Left cardiac atrium (tissue), 4 donors: ENCODE measurements at regions of chr22 and their contacts with region 1.

Region 1: DNA sequence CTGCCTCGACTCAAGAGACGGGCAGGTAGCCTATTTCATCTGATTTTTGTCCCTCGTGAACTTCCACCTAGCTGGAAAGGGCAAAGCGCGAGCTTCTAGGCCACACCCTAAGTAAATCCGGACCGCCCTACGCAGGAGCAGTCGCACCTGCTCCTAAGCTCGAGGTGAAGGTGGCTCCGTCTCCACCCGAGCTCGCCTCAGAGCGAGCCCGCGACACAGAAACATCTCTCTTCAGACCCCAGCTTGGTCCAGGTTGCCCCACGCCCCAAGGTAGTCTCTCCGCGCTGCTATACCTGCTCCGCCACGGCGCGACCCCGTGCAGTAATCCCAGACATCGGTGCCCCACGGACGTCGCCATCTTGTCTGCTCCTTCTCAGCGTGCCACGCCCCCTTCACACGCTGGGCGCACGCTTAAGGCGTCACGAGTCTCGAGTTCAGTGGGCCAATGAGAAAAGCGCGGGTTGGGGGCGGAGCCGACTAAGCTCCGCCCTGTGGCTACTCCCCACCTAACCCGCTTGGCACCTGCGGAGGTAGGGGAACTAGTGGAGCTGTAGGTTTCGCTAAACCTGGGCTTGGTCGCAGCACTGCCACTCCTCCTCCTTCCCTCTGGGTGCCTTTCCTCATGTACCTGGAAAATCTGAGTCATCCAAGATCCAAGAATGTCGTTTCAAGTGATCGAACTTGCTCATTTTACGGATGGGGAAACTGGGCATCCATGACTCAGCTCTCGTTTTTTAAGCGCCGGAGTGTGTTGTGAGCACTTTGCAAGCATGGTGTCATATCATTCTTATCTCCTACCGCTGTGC is at the start of gene PISD:
- DNase-seq: peak; percentile 96
- ATAC-seq: peak; percentile 99 to 100
- total RNA-seq, gene PISD: 25.2 to 40.8 TPM

Region 2: DNA sequence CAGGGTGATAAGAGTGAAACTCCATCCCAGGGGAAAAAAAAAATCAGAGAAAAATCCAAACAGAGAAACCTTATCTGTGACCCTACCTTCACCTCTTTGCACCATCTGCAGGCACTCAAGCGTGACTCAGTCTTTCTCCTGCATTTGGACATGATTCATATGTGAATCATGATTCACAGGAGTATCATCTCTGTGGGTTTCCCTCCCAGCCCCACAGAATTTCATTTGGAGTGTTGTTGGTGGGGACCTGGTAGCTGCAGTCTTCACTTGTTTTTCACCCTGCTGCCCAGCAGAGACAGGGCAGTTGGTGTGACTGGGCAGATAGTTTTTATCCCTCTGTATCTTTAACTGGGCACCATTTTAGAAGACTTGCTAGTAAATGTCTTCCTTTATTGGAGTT is 167.5 kb after region 1 on chr22:
- intact Hi-C with region 1: no loop called
- DNase-seq: no peak
- ATAC-seq: peak; percentile 71 to 96

Region 3: DNA sequence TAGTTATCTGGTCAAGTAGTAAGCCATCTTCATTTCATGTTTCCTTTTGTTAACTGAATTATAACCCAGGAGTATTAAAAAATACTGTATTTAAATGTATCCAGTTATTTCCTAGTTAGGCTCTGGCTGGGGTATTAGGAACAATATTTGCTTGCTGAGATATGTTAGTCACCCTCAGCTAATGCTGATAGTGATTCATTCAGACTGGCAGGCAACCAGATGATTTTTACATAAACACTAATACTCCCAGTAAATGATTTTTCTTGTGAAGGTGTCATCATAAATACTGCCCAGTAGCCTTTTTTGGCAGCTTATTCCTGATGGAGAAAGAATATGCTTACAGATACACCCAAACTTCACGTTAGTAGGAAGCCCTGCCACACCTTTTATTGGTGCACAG is 290.4 kb after region 1 on chr22:
- intact Hi-C with region 1: loop called in 1 of 2 experiments (anchors 10 kb)
- DNase-seq: no peak
- ATAC-seq: peak; percentile 14 to 84